ENCODE measurements at regions of chr10 and their contacts with region 1.

Region 1: DNA sequence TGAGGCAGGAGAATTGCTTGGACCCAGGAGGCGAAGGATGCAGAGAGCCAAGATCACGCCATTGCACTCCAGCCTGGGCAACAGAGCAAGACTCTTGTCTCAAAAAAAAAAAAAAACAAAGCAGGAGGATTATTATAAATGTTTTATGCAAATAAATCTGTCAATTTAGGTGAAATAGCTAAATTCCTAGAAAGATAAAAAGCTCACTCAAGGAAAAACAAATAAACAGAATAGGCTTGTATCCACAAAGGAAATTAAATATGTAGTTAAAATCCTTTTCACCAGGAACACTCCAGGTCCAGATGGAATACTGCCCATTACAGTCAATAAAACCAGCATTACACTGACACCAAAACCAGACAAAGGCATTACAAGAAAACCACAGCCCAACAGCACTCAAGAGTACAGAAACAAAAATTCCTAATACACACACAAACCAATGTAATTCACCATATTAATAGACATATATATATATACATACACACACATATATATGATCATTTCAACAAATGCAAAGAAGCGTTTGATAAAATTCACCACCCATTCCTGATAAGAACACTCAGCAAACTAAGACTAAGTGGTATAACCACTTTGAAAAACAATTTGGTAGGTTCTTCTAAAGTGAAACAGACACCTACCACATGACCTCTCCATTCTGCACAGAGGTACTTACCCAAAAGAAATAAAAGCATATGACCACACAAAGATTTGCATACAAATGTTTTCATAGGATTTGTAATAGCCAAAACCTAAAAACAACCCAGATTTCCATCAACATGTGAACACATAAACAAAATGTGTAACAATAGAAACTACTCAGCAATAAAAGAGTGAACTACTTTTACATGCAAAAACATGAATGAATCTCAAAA is 38.8 kb downstream of the ABI1 start:
- DNase-seq: no peak
- ATAC-seq: no peak
- H3K4me3 ChIP-seq: no peak overlapping the region
- H3K4me3 Mint-ChIP-seq: no peak overlapping the region
- H3K27ac ChIP-seq: no peak overlapping the region
- H3K27ac Mint-ChIP-seq: no peak overlapping the region
- H3K4me1 ChIP-seq: peaks cover 2 to 5% of the 10 kb centered on the region in 2 experiments
- H3K4me1 Mint-ChIP-seq: peaks cover 69 to 73% (median 72%) of the 10 kb centered on the region in 3 donors
- H3K27me3 ChIP-seq: no peaks in the 10 kb centered on the region
- H3K27me3 Mint-ChIP-seq: no peaks in the 10 kb centered on the region

Region 2: GRCh38 chr10:26612151-26612915 is 209.6 kb before region 1 on chr10:
- CTCF ChIA-PET with region 1: no interaction called
- POLR2A ChIA-PET with region 1: interaction called in 1 of 2 experiments, 10 read pairs
- DNase-seq: no peak
- ATAC-seq: no peak
- H3K4me3 ChIP-seq: no peak overlapping the region
- H3K4me3 Mint-ChIP-seq: no peak overlapping the region
- H3K27ac ChIP-seq: no peak overlapping the region
- H3K27ac Mint-ChIP-seq: no peak overlapping the region
- H3K4me1 ChIP-seq: no peaks in the 10 kb centered on the region
- H3K4me1 Mint-ChIP-seq: no peaks in the 10 kb centered on the region
- H3K27me3 ChIP-seq: peaks cover 0 to 3% of the 10 kb centered on the region in 2 experiments
- H3K27me3 Mint-ChIP-seq: peaks cover 5 to 6% of the 10 kb centered on the region in 2 donors

Region 3: GRCh38 chr10:26805567-26806245 is 16.2 kb before region 1 on chr10:
- CTCF ChIA-PET with region 1: interaction called in 1 of 2 experiments, 4 read pairs
- POLR2A ChIA-PET with region 1: interaction called, 4 to 13 read pairs
- DNase-seq: no peak
- ATAC-seq: peak in 2 of 4 experiments; percentile 32 to 39
- H3K4me3 ChIP-seq: no peak overlapping the region
- H3K4me3 Mint-ChIP-seq: peak overlapping the region; percentile 15 to 47 (median 40)
- H3K27ac ChIP-seq: no peak overlapping the region
- H3K27ac Mint-ChIP-seq: peak overlapping the region in 1 of 2 donors; percentile 25
- H3K4me1 ChIP-seq: peaks cover 31 to 37% of the 10 kb centered on the region in 2 experiments
- H3K4me1 Mint-ChIP-seq: peaks cover 64 to 88% (median 86%) of the 10 kb centered on the region in 3 donors
- H3K27me3 ChIP-seq: no peaks in the 10 kb centered on the region
- H3K27me3 Mint-ChIP-seq: no peaks in the 10 kb centered on the region